Heart left ventricle (tissue), 16 donors: ENCODE measurements at regions of chr11 and their contacts with region 1.

Region 1: DNA sequence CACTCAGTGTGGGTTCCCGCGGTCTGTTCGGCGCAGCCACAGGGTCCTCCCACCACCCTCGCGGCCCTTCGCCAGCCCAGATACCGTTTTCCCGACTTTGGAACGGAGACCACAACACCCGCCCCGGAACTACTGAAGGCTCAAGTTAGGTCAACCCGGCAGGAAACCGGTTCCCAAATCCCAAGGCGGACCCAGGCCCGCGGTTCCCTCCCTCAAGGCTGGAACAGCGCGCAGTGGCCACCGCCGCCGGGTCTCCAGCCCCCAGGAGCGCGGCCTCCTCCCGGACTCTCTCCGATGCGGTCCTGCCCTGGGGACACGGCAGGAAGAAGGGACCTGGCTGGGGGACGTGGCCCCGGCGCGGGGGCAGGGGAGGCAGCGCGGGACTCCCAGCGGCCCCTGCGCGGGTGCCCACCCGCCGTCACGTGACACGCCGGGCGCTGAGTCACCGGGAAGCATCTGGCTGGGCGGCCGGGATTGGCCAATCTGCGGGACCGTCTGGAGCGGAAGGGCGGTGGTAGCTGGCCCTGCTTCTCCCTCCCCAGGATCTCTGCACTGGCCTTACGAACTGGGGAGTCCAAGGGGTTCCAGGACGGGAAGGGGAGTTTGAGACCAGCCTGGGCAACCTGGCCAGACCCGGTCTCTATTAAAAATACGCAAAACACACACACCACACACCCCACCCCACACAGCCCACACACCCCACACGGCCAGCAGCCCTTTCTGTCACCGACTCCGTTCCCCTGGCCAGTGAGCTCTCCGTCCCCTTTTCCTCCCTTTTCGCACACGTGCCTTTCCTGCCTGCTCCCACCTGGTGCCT is 21.5 kb upstream of the MALAT1 start:
- DNase-seq: peak; percentile 98 to 99 (median 99)
- ATAC-seq: peak; percentile 83 to 92 (median 88)
- H3K4me3 ChIP-seq: peak overlapping the region; percentile 59 to 94 (median 80)
- H3K27ac ChIP-seq: peak overlapping the region; percentile 96 to 100 (median 100)
- H3K4me1 ChIP-seq: peaks cover 8 to 68% (median 51%) of the 10 kb centered on the region in 12 donors
- H3K27me3 ChIP-seq: no peaks in the 10 kb centered on the region
- CTCF ChIP-seq: no peak
- POLR2A ChIP-seq: peak; percentile 59 to 94

Region 2: DNA sequence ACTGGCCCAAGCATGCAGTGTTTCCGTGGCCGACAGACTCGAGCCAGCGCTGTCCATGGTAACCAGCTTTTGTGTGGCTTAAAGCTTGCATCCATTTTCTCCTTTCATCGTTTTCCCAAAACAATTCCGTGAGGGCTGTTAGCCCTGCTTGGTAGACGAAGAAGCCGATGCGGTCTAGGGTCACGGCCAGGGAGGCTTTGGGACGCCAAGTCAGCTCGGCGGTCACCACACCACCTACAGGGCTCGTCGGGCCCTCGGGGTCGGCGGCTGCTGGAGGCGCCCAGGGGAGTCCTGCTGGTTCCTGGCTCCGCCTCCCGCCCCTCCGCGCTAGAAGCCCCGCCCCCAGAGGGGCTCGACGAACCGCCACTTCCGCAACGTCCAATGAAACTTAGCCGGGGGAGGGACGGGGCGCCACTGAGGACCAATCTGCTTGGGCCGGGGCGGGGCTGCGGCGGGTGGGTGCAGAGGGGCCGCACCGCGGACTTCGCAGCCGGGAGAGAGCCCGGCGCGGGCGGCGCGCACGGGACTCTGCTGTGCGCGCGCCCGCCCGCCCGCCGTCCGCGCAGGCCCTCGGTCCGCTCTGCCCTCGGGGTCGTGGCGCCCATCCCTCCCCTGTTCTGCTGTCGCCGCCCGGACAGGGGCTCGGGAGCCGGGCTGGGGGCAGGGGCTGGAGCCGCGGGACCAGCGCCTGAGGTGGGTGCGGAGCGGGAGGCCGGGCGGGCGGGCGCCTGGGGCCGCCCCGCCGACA is 122.9 kb before region 1 on chr11 and contains the start of gene TIGD3:
- intact Hi-C with region 1: no loop called
- DNase-seq: peak; percentile 98 to 99 (median 98)
- ATAC-seq: peak; percentile 85 to 93 (median 92)
- H3K4me3 ChIP-seq: peak within 1 kb of the TSS; percentile 58 to 84 (median 78)
- H3K27ac ChIP-seq: peak within 1 kb of the TSS in 10 of 12 donors; percentile 5 to 78 (median 64)
- H3K4me1 ChIP-seq: peaks cover 0 to 49% (median 25%) of the 10 kb centered on the region in 12 donors
- H3K27me3 ChIP-seq: peaks cover 0 to 6% (median 0%) of the 10 kb centered on the region in 9 donors
- CTCF ChIP-seq: peak in 2 of 12 donors; percentile 7 to 21
- POLR2A ChIP-seq: peak; percentile 82 to 84
- total RNA-seq, gene TIGD3: 0.19 to 0.91 (median 0.47) TPM in 7 of 9 donors, not detected in the others

Region 3: GRCh38 chr11:65491614-65492386 is 14.4 kb after region 1 on chr11:
- intact Hi-C with region 1: loop called in 5 of 10 experiments (anchors 1 to 2 kb)
- DNase-seq: peak; percentile 77 to 93 (median 84)
- ATAC-seq: peak; percentile 7 to 37 (median 24)
- H3K4me3 ChIP-seq: peak overlapping the region in 3 of 12 donors; percentile 0 to 30 (median 2)
- H3K27ac ChIP-seq: peak overlapping the region; percentile 90 to 100 (median 99)
- H3K4me1 ChIP-seq: peaks cover 54 to 98% (median 96%) of the 10 kb centered on the region in 12 donors
- H3K27me3 ChIP-seq: no peaks in the 10 kb centered on the region
- CTCF ChIP-seq: no peak
- POLR2A ChIP-seq: peak in 1 of 2 donors; percentile 51

Region 4: DNA sequence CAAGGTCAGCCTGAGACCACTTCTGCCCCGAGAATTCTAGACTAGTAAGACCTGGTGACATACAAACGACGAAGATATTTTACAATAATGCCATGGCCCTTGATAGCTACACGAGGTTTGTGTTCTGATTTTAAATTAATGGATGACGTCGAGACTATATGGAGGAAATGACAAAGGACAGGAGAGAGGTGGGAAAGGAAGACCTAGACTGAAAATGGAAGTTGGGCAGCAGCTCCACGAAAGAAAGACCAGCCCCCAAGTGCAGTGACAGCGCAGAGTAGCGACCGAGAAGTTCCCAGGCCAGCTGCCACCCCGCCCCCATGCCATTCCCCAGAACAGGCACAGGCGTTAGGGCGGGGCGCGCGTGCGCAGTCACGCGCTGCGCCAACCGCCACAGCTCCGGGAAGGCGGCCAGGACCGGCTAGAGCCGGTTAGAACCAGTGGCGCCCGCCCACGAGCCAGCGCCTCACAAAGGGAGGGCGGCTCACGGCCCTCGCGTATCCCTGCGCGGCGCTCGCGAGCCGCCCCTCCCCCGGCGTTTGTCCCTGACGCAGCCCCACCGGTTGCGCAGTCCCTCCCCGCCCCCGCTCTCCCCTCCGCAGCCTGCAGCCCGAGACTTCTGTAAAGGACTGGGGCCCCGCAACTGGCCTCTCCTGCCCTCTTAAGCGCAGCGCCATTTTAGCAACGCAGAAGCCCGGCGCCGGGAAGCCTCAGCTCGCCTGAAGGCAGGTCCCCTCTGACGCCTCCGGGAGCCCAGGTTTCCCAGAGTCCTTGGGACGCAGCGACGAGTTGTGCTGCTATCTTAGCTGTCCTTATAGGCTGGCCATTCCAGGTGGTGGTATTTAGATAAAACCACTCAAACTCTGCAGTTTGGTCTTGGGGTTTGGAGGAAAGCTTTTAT is 20.0 kb after region 1 on chr11:
- intact Hi-C with region 1: loop called in 7 of 10 experiments (anchors 1 to 2 kb)
- DNase-seq: peak; percentile 99 to 100 (median 99)
- ATAC-seq: peak; percentile 77 to 93 (median 82)
- H3K4me3 ChIP-seq: peak overlapping the region; percentile 52 to 90 (median 81)
- H3K27ac ChIP-seq: peak overlapping the region; percentile 90 to 100 (median 99)
- H3K4me1 ChIP-seq: peaks cover 19 to 52% (median 47%) of the 10 kb centered on the region in 12 donors
- H3K27me3 ChIP-seq: no peaks in the 10 kb centered on the region
- CTCF ChIP-seq: peak in 1 of 12 donors; percentile 8
- POLR2A ChIP-seq: peak; percentile 48 to 90

Region 5: DNA sequence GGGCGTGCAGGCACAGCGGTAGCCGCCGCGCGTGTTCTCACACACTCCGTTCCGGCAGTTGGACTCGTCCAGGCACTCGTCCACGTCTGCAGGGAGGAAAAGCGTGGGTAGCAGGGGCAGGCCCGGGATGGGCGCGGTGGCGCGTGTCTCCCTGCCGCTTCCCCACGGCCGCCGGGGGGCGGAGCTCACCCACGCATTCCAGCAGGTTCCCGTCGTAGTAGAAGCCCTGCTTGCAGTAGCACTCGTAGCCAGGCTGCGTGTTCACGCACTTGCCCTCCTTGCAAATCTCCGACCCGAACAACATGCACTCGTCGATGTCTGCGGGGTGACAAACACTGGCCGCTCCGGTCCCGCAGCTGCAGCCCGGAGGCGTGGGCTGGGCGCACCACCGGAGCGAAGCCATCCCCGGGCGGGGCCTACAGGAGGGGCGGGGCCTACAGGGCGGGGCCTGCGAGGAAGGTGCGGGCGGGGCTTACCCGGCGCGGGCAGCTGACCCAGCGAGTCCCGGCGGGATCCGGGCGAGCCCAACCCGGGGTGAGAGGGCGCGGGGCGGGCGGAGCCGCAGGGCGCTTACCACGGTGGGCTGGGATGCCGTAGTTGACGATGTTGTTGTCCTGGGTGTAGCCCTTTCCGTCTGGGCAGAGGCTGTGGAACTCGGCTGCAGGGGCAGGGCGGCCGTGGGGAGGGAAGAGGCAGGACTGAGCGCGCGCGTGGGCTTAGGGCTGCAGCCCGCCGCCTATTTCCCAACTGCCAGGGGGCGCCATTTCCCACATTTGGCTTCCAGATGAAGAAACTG is 63.1 kb after region 1 on chr11:
- intact Hi-C with region 1: no loop called
- DNase-seq: peak; percentile 90 to 95 (median 93)
- ATAC-seq: peak; percentile 84 to 93 (median 91)
- H3K4me3 ChIP-seq: peak overlapping the region; percentile 11 to 66 (median 52)
- H3K27ac ChIP-seq: peak overlapping the region; percentile 66 to 95 (median 88)
- H3K4me1 ChIP-seq: peaks cover 0 to 28% (median 20%) of the 10 kb centered on the region in 12 donors
- H3K27me3 ChIP-seq: no peaks in the 10 kb centered on the region
- CTCF ChIP-seq: peak; percentile 79 to 95 (median 88)
- POLR2A ChIP-seq: peak in 1 of 2 donors; percentile 49